ENCODE measurements at regions of chr6 and their contacts with region 1.

Region 1: GRCh38 chr6:21952367-21952766 is 344.5 kb downstream of the PRL start:
- DNase-seq: no peak
- ATAC-seq: no peak
- H3K4me3 ChIP-seq: no peak overlapping the region
- H3K27ac ChIP-seq: no peak overlapping the region
- H3K4me1 ChIP-seq: peaks cover 27% of the 10 kb centered on the region
- H3K27me3 ChIP-seq: no peaks in the 10 kb centered on the region
- CTCF ChIP-seq: no peak

Region 2: GRCh38 chr6:22068561-22069305 is 116.4 kb after region 1 on chr6:
- CTCF ChIA-PET with region 1: no interaction called
- POLR2A ChIA-PET with region 1: interaction called, 10 read pairs
- intact Hi-C with region 1: no loop called
- DNase-seq: no peak
- ATAC-seq: no peak
- H3K4me3 ChIP-seq: no peak overlapping the region
- H3K27ac ChIP-seq: no peak overlapping the region
- H3K4me1 ChIP-seq: no peaks in the 10 kb centered on the region
- H3K27me3 ChIP-seq: no peaks in the 10 kb centered on the region
- CTCF ChIP-seq: no peak

Measured in PC-3 (cell line).